AG04449 (cell line): ENCODE measurements at regions of chr6 and their contacts with region 1.

Region 1: GRCh38 chr6:27893059-27893835 is 18.9 kb downstream of the OR2B2 start:
- DNase-seq: peak; percentile 94
- H3K4me3 ChIP-seq: peak overlapping the region; percentile 95
- CTCF ChIP-seq: no peak

Region 2: GRCh38 chr6:27132532-27133280 is 760.5 kb before region 1 on chr6:
- CTCF ChIA-PET with region 1: interaction called, 4 read pairs
- POLR2A ChIA-PET with region 1: interaction called, 11 read pairs
- DNase-seq: peak; percentile 100
- H3K4me3 ChIP-seq: peak overlapping the region; percentile 65
- CTCF ChIP-seq: no peak

Region 3: GRCh38 chr6:27157459-27158315 is 735.6 kb before region 1 on chr6:
- CTCF ChIA-PET with region 1: interaction called, 33 read pairs
- POLR2A ChIA-PET with region 1: no interaction called
- DNase-seq: peak; percentile 40
- H3K4me3 ChIP-seq: peak overlapping the region; percentile 59
- CTCF ChIP-seq: peak; percentile 50

Region 4: GRCh38 chr6:27565821-27566766 is 327.2 kb before region 1 on chr6:
- CTCF ChIA-PET with region 1: no interaction called
- POLR2A ChIA-PET with region 1: no interaction called
- DNase-seq: no peak
- H3K4me3 ChIP-seq: no peak overlapping the region
- CTCF ChIP-seq: no peak

Region 5: DNA sequence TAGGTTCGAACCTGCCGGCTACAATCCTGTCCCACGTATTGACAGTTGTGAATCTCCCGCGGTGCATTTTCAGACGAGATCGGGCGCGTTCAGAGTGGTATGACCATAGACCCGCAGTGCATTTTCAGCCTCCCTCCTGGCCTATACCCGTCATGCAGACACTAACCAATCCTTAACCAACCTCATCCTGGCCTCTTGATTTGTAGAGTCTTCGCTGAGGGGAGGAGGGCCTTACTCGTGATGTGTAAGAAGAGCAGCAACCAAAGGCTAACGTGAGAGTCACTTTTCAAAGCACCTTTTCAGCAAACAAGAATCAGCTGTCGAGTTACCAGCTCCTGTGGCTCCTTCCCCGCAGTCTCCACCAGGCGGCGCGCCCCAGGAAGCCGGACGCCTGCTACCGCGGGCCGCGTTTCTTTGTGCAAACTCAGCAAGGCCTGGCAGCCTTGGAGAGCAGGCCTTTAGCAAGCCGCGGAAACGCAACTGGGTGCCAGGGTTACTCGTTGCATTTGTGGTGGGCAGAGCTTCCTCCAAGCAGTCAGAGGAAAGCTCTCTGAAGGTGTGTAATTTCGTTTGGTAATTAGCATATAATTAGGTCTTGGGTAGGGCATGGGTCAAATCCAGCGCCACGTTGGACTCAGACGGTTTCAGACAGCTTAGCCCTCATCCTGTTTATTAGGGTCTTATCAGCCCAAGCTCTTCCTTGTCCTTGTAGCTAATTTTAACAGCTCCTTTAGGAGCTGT is 120.8 kb before region 1 on chr6:
- CTCF ChIA-PET with region 1: interaction called, 135 read pairs
- POLR2A ChIA-PET with region 1: interaction called, 4 read pairs
- DNase-seq: peak; percentile 37
- H3K4me3 ChIP-seq: peak overlapping the region; percentile 36
- CTCF ChIP-seq: peak; percentile 98

Region 6: GRCh38 chr6:27825025-27825793 is 68.0 kb before region 1 on chr6:
- CTCF ChIA-PET with region 1: interaction called, 213 read pairs
- POLR2A ChIA-PET with region 1: interaction called, 34 read pairs
- DNase-seq: no peak
- H3K4me3 ChIP-seq: peak overlapping the region; percentile 66
- CTCF ChIP-seq: no peak

Region 7: GRCh38 chr6:27864906-27865849 is 28.1 kb before region 1 on chr6:
- CTCF ChIA-PET with region 1: interaction called, 27 read pairs
- POLR2A ChIA-PET with region 1: interaction called, 96 read pairs
- DNase-seq: peak; percentile 89
- H3K4me3 ChIP-seq: peak overlapping the region; percentile 80
- CTCF ChIP-seq: no peak

Region 8: GRCh38 chr6:28355743-28356665 is 462.8 kb after region 1 on chr6:
- CTCF ChIA-PET with region 1: interaction called, 18 read pairs
- POLR2A ChIA-PET with region 1: no interaction called
- DNase-seq: peak; percentile 42
- H3K4me3 ChIP-seq: peak overlapping the region; percentile 74
- CTCF ChIP-seq: peak; percentile 60